Heart left ventricle (tissue), 16 donors: ENCODE measurements at regions of chr7 and their contacts with region 1.

Region 1: DNA sequence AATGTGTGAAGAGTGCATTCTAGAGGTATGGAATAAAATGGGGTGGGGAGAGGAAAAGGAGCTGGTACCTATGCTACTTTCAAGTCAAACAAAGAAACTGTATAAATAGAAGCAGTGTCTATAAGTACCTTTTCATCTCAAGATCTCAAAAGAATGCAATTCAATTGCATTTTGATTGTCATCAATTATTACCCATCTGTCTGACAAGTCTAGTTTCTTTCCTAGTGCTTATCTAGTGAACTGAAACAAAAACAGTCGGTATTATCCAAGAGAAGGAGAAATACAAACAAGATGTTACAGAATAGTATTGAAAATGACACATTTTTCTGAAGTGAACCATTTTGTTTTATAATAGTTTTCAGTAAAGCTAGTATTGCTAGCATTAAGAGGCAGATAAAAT is 754.5 kb upstream of the LRRN3 start:
- DNase-seq: no peak
- ATAC-seq: no peak
- H3K4me3 ChIP-seq: no peak overlapping the region
- H3K27ac ChIP-seq: no peak overlapping the region
- H3K4me1 ChIP-seq: no peaks in the 10 kb centered on the region
- H3K27me3 ChIP-seq: no peaks in the 10 kb centered on the region
- CTCF ChIP-seq: no peak
- POLR2A ChIP-seq: no peak

Region 2: DNA sequence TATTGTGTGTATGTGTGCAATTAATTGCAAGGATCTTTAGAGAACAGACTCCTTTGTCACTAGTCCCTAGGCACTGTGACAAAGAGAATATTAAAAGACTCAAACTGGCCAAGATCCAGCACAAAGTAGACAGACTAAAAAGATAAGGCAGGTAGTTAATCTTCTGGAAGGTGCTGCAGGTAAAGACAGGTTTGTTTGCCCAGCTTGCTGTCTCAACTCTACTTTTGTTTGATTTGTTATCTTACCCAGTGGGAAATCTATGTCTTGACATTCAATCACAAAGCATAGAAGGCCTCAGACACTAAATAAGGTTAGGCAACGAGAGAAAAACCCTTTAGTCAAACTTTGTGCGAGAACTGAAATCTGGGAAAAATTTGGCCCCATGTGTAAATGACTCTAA is 53.3 kb before region 1 on chr7:
- intact Hi-C with region 1: loop called in 1 of 10 experiments (anchors 10 kb)
- DNase-seq: no peak
- ATAC-seq: no peak
- H3K4me3 ChIP-seq: no peak overlapping the region
- H3K27ac ChIP-seq: no peak overlapping the region
- H3K4me1 ChIP-seq: no peaks in the 10 kb centered on the region
- H3K27me3 ChIP-seq: no peaks in the 10 kb centered on the region
- CTCF ChIP-seq: no peak
- POLR2A ChIP-seq: no peak

Region 3: GRCh38 chr7:110407708-110408107 is 71.3 kb after region 1 on chr7:
- intact Hi-C with region 1: loop called in 1 of 10 experiments (anchors 10 kb)
- DNase-seq: no peak
- ATAC-seq: no peak
- H3K4me3 ChIP-seq: no peak overlapping the region
- H3K27ac ChIP-seq: no peak overlapping the region
- H3K4me1 ChIP-seq: no peaks in the 10 kb centered on the region
- H3K27me3 ChIP-seq: no peaks in the 10 kb centered on the region
- CTCF ChIP-seq: no peak
- POLR2A ChIP-seq: no peak